GM10248 (cell line): ENCODE measurements at regions of chr12 and their contacts with region 1.

Region 1: DNA sequence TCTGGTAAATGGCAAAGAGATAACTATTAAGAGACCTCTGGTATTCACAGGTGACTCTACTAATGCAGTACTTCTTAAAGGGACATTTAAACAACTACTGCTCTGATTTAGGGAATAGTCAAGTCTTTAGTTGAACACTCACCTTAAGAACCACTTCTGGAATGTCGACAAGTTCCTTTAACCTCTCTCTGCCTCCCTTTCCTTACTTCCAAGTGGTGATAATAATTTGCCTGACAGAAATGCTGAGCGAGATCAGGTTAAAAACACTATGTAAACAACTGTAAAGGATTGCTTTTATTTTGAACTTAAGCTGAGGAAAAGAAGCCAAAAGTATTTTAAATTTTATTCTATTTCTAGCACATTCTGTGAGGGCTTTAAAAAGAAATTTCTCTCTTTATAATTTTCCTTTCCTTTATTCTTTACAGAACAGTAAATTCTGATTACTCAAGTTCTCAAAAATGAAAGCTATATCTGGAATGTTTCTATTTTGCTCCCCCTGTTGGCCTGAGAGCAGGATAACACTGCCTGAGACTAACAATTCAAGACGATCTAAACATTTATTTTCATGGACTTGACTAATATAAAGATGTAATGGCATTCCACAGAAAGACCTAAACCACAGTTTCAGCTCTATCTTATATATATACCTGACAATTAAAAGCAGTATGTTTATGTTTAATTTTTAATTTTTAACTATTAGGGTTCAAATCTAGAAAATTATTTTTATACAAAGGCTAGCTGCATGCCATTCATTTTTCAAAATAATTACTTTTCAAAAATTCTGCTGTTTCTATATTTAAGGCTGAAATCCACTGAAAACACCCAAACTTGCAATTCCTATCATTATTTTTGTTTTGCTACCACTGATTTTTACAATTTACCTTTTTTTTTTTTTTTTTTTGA is 29.2 kb downstream of the ZCCHC8 start:
- DNase-seq: peak; percentile 54
- CTCF ChIP-seq: peak; percentile 80

Region 2: GRCh38 chr12:122356192-122356635 is 115.4 kb before region 1 on chr12:
- CTCF ChIA-PET with region 1: interaction called, 12 read pairs
- POLR2A ChIA-PET with region 1: no interaction called
- DNase-seq: peak; percentile 70
- CTCF ChIP-seq: peak; percentile 72

Region 3: DNA sequence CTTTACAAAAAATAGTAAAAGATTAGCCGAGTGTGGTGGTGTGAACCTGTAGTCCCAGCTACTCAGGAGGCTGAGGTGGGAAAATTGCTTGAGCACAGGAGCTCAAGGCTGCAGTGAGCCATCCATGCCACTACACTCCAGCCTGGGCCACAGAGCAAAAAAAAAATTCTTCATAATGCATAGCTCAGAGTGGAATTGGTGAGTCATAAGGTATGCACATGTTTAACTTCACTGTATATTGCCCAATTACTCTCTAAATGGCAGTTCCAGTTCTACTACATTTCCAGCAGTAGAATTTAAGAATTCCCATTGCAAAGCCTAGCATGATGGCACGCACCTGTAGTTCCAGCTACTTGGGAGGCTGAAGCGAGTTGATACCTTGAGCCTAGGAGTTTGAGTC is 22.2 kb before region 1 on chr12:
- CTCF ChIA-PET with region 1: interaction called, 52 read pairs
- POLR2A ChIA-PET with region 1: interaction called, 4 read pairs
- DNase-seq: no peak
- CTCF ChIP-seq: no peak

Region 4: GRCh38 chr12:122486805-122487426 is 15.3 kb after region 1 on chr12:
- CTCF ChIA-PET with region 1: interaction called, 48 read pairs
- POLR2A ChIA-PET with region 1: no interaction called
- DNase-seq: no peak
- CTCF ChIP-seq: no peak

Region 5: GRCh38 chr12:122500685-122501488 is 29.3 kb after region 1 on chr12 and contains the start of gene ZCCHC8:
- CTCF ChIA-PET with region 1: interaction called, 48 read pairs
- POLR2A ChIA-PET with region 1: interaction called, 10 read pairs
- DNase-seq: peak; percentile 94
- CTCF ChIP-seq: peak; percentile 30

Region 6: DNA sequence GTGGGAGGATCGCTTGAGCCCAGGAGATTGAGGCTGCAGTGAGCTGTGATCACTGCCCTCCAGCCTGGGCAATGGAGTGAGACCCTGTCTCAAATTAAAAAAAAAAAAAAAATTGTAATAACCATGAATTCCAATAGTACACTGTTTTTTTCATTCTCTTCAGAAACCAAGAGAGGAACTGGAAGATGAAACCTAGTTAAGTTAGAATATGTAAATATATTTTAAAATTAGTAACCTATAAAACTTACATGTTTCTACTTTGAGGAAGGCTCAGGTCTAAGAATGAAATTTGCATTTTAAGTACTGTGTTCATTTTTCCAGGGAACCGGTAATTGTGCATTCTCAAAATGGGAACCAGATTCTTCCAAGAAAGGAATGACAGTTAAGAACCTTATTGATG is 74.3 kb after region 1 on chr12:
- CTCF ChIA-PET with region 1: no interaction called
- POLR2A ChIA-PET with region 1: no interaction called
- DNase-seq: peak; percentile 48
- CTCF ChIP-seq: no peak